Activated naive CD4-positive, alpha-beta T cell treated with anti-CD3 and anti-CD28 coated beads for 36 hours (primary cell): ENCODE measurements at regions of chr13 and their contacts with region 1.

Region 1: GRCh38 chr13:42405665-42406390 is 133.9 kb downstream of the AKAP11 start:
- DNase-seq: peak; percentile 87
- H3K4me3 Mint-ChIP-seq: peak overlapping the region; percentile 51
- H3K27ac Mint-ChIP-seq: peak overlapping the region; percentile 96
- H3K4me1 Mint-ChIP-seq: peaks cover 41% of the 10 kb centered on the region
- H3K27me3 Mint-ChIP-seq: no peaks in the 10 kb centered on the region

Region 2: GRCh38 chr13:42377640-42378382 is 28.0 kb before region 1 on chr13:
- CTCF ChIA-PET with region 1: no interaction called
- intact Hi-C with region 1: loop called (anchors 1 kb)
- DNase-seq: peak; percentile 71
- H3K4me3 Mint-ChIP-seq: no peak overlapping the region
- H3K27ac Mint-ChIP-seq: peak overlapping the region; percentile 95
- H3K4me1 Mint-ChIP-seq: peaks cover 59% of the 10 kb centered on the region
- H3K27me3 Mint-ChIP-seq: no peaks in the 10 kb centered on the region

Region 3: DNA sequence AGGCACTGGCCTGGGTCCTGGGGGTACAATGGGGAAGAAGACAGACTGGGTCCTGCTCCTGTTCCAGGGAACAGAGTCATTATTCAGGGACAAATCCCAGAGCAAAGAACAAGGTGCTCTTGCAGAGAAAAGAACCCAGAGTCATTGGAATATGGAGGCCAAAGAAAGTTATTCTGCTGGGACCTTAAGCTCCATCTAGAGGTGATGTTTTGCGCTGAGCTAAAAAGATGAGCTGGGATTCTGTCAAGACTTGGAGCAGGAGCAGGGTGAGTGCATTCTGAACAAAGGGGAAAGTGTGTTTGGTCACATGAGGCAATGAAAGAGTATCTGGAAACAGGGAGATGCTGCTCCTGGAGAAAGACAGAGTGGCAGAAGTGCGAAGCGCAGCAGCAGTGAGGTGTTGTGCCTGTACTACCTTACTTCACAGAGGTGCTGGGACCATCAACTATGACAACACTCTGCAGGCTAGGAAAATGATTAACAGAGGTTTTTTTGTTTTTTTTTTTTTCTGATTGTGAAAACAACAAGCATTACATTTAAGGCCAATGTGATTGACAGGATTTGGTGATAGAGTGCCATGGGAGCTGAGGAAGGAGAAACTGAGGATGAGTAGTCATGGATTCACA is 72.8 kb after region 1 on chr13:
- CTCF ChIA-PET with region 1: interaction called, 3 read pairs
- intact Hi-C with region 1: loop called (anchors 5 kb)
- DNase-seq: no peak
- H3K4me3 Mint-ChIP-seq: no peak overlapping the region
- H3K27ac Mint-ChIP-seq: no peak overlapping the region
- H3K4me1 Mint-ChIP-seq: peaks cover 17% of the 10 kb centered on the region
- H3K27me3 Mint-ChIP-seq: no peaks in the 10 kb centered on the region